ENCODE measurements at regions of chr2 and their contacts with region 1.

Region 1: DNA sequence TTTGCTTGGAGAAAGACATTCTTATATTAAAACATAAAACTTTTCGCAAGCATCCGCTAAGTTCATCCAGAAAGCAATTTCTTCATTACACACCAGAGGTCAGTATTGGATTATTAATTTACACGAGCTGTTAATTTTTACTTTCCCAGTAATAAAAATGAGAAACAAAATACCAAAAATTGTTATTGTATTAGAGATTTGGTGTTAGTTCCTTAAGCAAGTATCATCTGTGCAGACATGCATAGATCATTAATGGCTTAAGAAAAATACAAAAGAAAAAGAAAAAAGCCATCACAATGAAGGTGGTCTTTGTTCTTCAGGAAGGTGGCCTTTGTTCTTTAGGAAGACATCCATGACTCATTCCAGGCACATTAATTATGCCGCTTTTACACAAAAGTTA is 53.6 kb upstream of the HNMT start:
- DNase-seq: no peak
- H3K4me3 ChIP-seq: no peak overlapping the region
- H3K27ac ChIP-seq: no peak overlapping the region
- H3K27me3 ChIP-seq: no peaks in the 10 kb centered on the region
- CTCF ChIP-seq: peak; percentile 58

Region 2: GRCh38 chr2:138373993-138374408 is 463.4 kb after region 1 on chr2:
- CTCF ChIA-PET with region 1: interaction called, 59 read pairs
- POLR2A ChIA-PET with region 1: no interaction called
- DNase-seq: peak; percentile 18
- H3K4me3 ChIP-seq: no peak overlapping the region
- H3K27ac ChIP-seq: no peak overlapping the region
- H3K27me3 ChIP-seq: no peaks in the 10 kb centered on the region
- CTCF ChIP-seq: peak; percentile 81

Region 3: DNA sequence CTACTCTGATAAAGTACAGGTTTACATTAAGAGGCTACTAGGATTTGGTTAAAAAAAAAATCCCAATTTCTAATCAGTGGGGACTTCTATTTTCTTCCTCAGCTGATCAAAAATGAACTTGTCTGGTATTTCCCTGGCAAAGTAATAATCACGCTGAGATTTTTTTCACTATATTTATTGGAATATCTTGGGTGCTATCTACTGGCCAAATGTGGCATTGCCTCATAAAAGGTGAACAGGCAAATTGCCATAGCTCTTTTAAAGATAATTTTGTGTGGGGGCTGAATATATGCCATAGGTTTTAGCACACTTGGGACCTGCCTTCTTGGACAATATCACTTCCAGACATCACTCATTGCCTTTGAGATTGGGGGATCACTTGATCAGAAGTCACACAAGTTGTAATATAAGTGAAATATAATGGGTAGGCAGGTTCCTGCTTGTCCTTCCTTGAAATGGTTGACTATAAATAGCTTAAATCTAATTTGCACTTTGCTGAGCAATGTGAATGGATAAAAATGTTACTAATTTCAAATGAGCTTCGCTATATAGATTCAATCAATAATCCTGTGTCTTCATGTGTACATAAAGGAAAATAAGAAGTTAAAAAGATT is 876.5 kb after region 1 on chr2:
- CTCF ChIA-PET with region 1: interaction called, 61 read pairs
- POLR2A ChIA-PET with region 1: no interaction called
- DNase-seq: no peak
- H3K4me3 ChIP-seq: no peak overlapping the region
- H3K27ac ChIP-seq: no peak overlapping the region
- H3K27me3 ChIP-seq: peaks cover 2% of the 10 kb centered on the region
- CTCF ChIP-seq: peak; percentile 70

Measured in AG04450 (cell line).